B cell (primary cell): ENCODE measurements at regions of chr2 and their contacts with region 1.

Region 1: DNA sequence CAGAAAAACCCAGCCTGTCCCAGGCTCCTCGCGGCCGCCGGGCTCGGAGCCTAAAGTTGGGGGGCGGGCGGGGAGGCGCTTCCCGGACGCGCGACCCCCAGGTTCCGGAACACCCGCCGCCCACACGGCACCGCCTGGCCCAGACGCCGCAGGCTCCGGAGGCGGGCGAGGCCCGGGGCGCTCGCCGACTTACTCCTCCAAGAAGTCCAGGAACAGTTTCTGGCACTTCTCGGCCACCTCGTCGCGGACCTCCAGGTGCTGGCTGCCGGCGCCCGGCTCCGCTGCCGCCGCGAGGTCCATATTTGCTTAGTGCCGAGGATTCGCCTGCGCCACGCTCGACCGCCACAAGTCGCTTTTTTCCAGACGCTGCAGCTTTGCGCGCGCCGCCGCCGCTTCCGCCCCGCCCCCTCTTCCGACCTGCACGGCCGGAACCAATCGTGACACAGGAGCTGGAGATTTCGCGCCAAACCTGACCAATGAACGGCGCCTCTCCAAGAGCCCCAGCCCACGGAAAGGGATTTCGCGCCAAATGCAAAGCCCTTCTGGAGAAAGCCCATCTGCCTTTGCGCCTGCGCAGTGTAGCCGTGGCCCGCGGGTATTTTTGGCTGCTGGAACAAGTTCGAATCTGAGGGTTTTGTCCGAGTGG is at the start of gene MCM6:
- DNase-seq: peak; percentile 96
- ATAC-seq: peak; percentile 92
- H3K4me3 ChIP-seq: peak within 1 kb of the TSS; percentile 68 to 80 (median 76)
- H3K4me3 Mint-ChIP-seq: peak within 1 kb of the TSS; percentile 95
- H3K27ac ChIP-seq: peak within 1 kb of the TSS; percentile 69 to 79
- H3K27ac Mint-ChIP-seq: peak within 1 kb of the TSS; percentile 94
- H3K4me1 ChIP-seq: peaks cover 8 to 23% of the 10 kb centered on the region in 2 donors
- H3K4me1 Mint-ChIP-seq: peaks cover 24% of the 10 kb centered on the region
- H3K27me3 ChIP-seq: no peaks in the 10 kb centered on the region
- H3K27me3 Mint-ChIP-seq: no peaks in the 10 kb centered on the region
- CTCF ChIP-seq: no peak
- total RNA-seq, gene MCM6: 29.6 and 30.0 TPM in 2 replicates

Region 2: GRCh38 chr2:135531231-135532228 is 344.7 kb before region 1 on chr2 and contains the start of gene R3HDM1:
- CTCF ChIA-PET with region 1: no interaction called
- POLR2A ChIA-PET with region 1: no interaction called
- intact Hi-C with region 1: loop called (anchors 1 kb)
- DNase-seq: peak; percentile 99
- ATAC-seq: peak; percentile 79
- H3K4me3 ChIP-seq: peak within 1 kb of the TSS; percentile 81 to 100 (median 91)
- H3K4me3 Mint-ChIP-seq: no peak within 1 kb of the TSS
- H3K27ac ChIP-seq: peak within 1 kb of the TSS; percentile 86 to 88
- H3K27ac Mint-ChIP-seq: peak within 1 kb of the TSS; percentile 81
- H3K4me1 ChIP-seq: peaks cover 13 to 14% of the 10 kb centered on the region in 2 donors
- H3K4me1 Mint-ChIP-seq: peaks cover 12% of the 10 kb centered on the region
- H3K27me3 ChIP-seq: no peaks in the 10 kb centered on the region
- H3K27me3 Mint-ChIP-seq: no peaks in the 10 kb centered on the region
- CTCF ChIP-seq: peak; percentile 21
- total RNA-seq, gene R3HDM1: 52.0 and 57.8 TPM in 2 replicates

Region 3: GRCh38 chr2:135741395-135742324 is 134.5 kb before region 1 on chr2 and contains the start of gene UBXN4:
- CTCF ChIA-PET with region 1: no interaction called
- POLR2A ChIA-PET with region 1: no interaction called
- intact Hi-C with region 1: loop called (anchors 1 kb)
- DNase-seq: peak; percentile 98
- ATAC-seq: peak; percentile 87
- H3K4me3 ChIP-seq: peak within 1 kb of the TSS; percentile 76 to 94 (median 91)
- H3K4me3 Mint-ChIP-seq: peak within 1 kb of the TSS; percentile 93
- H3K27ac ChIP-seq: peak within 1 kb of the TSS; percentile 94 to 95
- H3K27ac Mint-ChIP-seq: peak within 1 kb of the TSS; percentile 96
- H3K4me1 ChIP-seq: peaks cover 9 to 17% of the 10 kb centered on the region in 2 donors
- H3K4me1 Mint-ChIP-seq: peaks cover 38% of the 10 kb centered on the region
- H3K27me3 ChIP-seq: no peaks in the 10 kb centered on the region
- H3K27me3 Mint-ChIP-seq: no peaks in the 10 kb centered on the region
- CTCF ChIP-seq: peak; percentile 35
- total RNA-seq, gene UBXN4: 112 and 113 TPM in 2 replicates

Region 4: DNA sequence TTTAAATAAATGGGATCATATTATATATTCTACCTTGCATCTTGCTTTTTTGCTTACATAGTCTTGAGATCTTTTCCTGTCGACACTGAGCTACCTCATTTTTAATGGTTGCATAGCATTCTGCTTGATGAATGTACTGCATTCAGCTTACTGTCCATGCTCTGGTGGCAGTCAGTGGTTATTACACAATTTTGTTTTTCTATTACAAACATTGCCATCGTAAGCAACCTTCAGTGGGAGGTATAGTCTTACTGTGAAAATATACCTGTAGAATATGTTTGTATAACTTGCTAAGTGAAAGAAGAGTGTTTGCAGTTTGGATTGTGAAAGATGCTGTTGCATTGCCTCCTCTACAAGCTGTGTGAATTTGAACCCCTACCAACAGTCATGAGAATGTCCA is 91.2 kb before region 1 on chr2:
- CTCF ChIA-PET with region 1: no interaction called
- POLR2A ChIA-PET with region 1: no interaction called
- intact Hi-C with region 1: no loop called
- DNase-seq: no peak
- ATAC-seq: no peak
- H3K4me3 ChIP-seq: no peak overlapping the region
- H3K4me3 Mint-ChIP-seq: no peak overlapping the region
- H3K27ac ChIP-seq: no peak overlapping the region
- H3K27ac Mint-ChIP-seq: no peak overlapping the region
- H3K4me1 ChIP-seq: no peaks in the 10 kb centered on the region
- H3K4me1 Mint-ChIP-seq: peaks cover 11% of the 10 kb centered on the region
- H3K27me3 ChIP-seq: no peaks in the 10 kb centered on the region
- H3K27me3 Mint-ChIP-seq: no peaks in the 10 kb centered on the region
- CTCF ChIP-seq: peak; percentile 41

Region 5: GRCh38 chr2:135905679-135906078 is 29.5 kb after region 1 on chr2:
- CTCF ChIA-PET with region 1: no interaction called
- POLR2A ChIA-PET with region 1: no interaction called
- intact Hi-C with region 1: no loop called
- DNase-seq: no peak
- ATAC-seq: no peak
- H3K4me3 ChIP-seq: no peak overlapping the region
- H3K4me3 Mint-ChIP-seq: no peak overlapping the region
- H3K27ac ChIP-seq: no peak overlapping the region
- H3K27ac Mint-ChIP-seq: no peak overlapping the region
- H3K4me1 ChIP-seq: no peaks in the 10 kb centered on the region
- H3K4me1 Mint-ChIP-seq: no peaks in the 10 kb centered on the region
- H3K27me3 ChIP-seq: no peaks in the 10 kb centered on the region
- H3K27me3 Mint-ChIP-seq: no peaks in the 10 kb centered on the region
- CTCF ChIP-seq: no peak

Region 6: GRCh38 chr2:136399667-136400316 is 523.6 kb after region 1 on chr2:
- CTCF ChIA-PET with region 1: no interaction called
- POLR2A ChIA-PET with region 1: no interaction called
- intact Hi-C with region 1: no loop called
- DNase-seq: no peak
- ATAC-seq: no peak
- H3K4me3 ChIP-seq: no peak overlapping the region
- H3K4me3 Mint-ChIP-seq: no peak overlapping the region
- H3K27ac ChIP-seq: no peak overlapping the region
- H3K27ac Mint-ChIP-seq: no peak overlapping the region
- H3K4me1 ChIP-seq: peaks cover 7 to 9% of the 10 kb centered on the region in 2 donors
- H3K4me1 Mint-ChIP-seq: peaks cover 12% of the 10 kb centered on the region
- H3K27me3 ChIP-seq: peaks cover 0 to 8% (median 0%) of the 10 kb centered on the region in 4 experiments
- H3K27me3 Mint-ChIP-seq: peaks cover 25% of the 10 kb centered on the region
- CTCF ChIP-seq: no peak